ENCODE measurements at regions of chr9 and their contacts with region 1.

Region 1: GRCh38 chr9:123338710-123339665 is 17.0 kb upstream of the CRB2 start:
- DNase-seq: peak; percentile 76
- ATAC-seq: peak; percentile 56
- H3K4me3 Mint-ChIP-seq: peak overlapping the region; percentile 85
- H3K27ac Mint-ChIP-seq: peak overlapping the region; percentile 96
- H3K4me1 Mint-ChIP-seq: peaks cover 97% of the 10 kb centered on the region
- H3K27me3 Mint-ChIP-seq: no peaks in the 10 kb centered on the region
- CTCF ChIP-seq: no peak

Region 2: GRCh38 chr9:123081824-123082223 is 257.2 kb before region 1 on chr9:
- CTCF ChIA-PET with region 1: interaction called, 10 read pairs
- POLR2A ChIA-PET with region 1: no interaction called
- intact Hi-C with region 1: no loop called
- DNase-seq: no peak
- ATAC-seq: peak; percentile 66
- H3K4me3 Mint-ChIP-seq: no peak overlapping the region
- H3K27ac Mint-ChIP-seq: no peak overlapping the region
- H3K4me1 Mint-ChIP-seq: peaks cover 19% of the 10 kb centered on the region
- H3K27me3 Mint-ChIP-seq: no peaks in the 10 kb centered on the region
- CTCF ChIP-seq: peak; percentile 44

Region 3: GRCh38 chr9:123174887-123175518 is 164.0 kb before region 1 on chr9:
- CTCF ChIA-PET with region 1: no interaction called
- POLR2A ChIA-PET with region 1: interaction called, 5 read pairs
- intact Hi-C with region 1: loop called (anchors 1 kb)
- DNase-seq: no peak
- ATAC-seq: peak; percentile 91
- H3K4me3 Mint-ChIP-seq: peak overlapping the region; percentile 63
- H3K27ac Mint-ChIP-seq: peak overlapping the region; percentile 97
- H3K4me1 Mint-ChIP-seq: peaks cover 82% of the 10 kb centered on the region
- H3K27me3 Mint-ChIP-seq: no peaks in the 10 kb centered on the region
- CTCF ChIP-seq: no peak

Region 4: DNA sequence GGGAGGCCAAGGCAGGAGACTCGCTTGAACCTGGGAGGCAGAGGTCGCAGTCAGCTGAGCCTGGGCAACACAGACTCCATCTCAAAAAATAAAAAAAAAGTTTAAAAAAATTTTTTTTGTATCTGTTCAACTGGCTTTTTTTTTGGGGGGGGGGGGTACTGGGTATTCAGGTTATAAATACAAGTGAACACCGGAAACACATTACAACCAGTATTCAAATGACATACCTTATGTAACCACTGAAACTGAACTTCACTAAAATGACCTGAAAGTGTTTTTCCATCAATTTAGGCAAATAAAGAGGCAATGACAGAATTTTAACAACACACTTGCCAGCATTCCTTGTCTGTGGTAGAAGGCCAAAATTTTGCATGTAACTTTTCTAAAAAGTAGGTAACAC is 104.1 kb before region 1 on chr9:
- CTCF ChIA-PET with region 1: interaction called, 6 read pairs
- POLR2A ChIA-PET with region 1: interaction called, 85 read pairs
- intact Hi-C with region 1: loop called (anchors 1 kb)
- DNase-seq: no peak
- ATAC-seq: peak; percentile 42
- H3K4me3 Mint-ChIP-seq: peak overlapping the region; percentile 69
- H3K27ac Mint-ChIP-seq: peak overlapping the region; percentile 94
- H3K4me1 Mint-ChIP-seq: peaks cover 49% of the 10 kb centered on the region
- H3K27me3 Mint-ChIP-seq: no peaks in the 10 kb centered on the region
- CTCF ChIP-seq: no peak

Region 5: GRCh38 chr9:123302348-123303214 is 36.4 kb before region 1 on chr9:
- CTCF ChIA-PET with region 1: interaction called, 3 read pairs
- POLR2A ChIA-PET with region 1: interaction called, 18 read pairs
- intact Hi-C with region 1: loop called (anchors 1 kb)
- DNase-seq: no peak
- ATAC-seq: no peak
- H3K4me3 Mint-ChIP-seq: no peak overlapping the region
- H3K27ac Mint-ChIP-seq: no peak overlapping the region
- H3K4me1 Mint-ChIP-seq: peaks cover 14% of the 10 kb centered on the region
- H3K27me3 Mint-ChIP-seq: no peaks in the 10 kb centered on the region
- CTCF ChIP-seq: no peak

Region 6: GRCh38 chr9:123322273-123323195 is 16.5 kb before region 1 on chr9:
- CTCF ChIA-PET with region 1: interaction called, 7 read pairs
- POLR2A ChIA-PET with region 1: interaction called, 304 read pairs
- intact Hi-C with region 1: loop called (anchors 1 kb)
- DNase-seq: peak; percentile 53
- ATAC-seq: peak; percentile 79
- H3K4me3 Mint-ChIP-seq: peak overlapping the region; percentile 75
- H3K27ac Mint-ChIP-seq: peak overlapping the region; percentile 94
- H3K4me1 Mint-ChIP-seq: peaks cover 90% of the 10 kb centered on the region
- H3K27me3 Mint-ChIP-seq: no peaks in the 10 kb centered on the region
- CTCF ChIP-seq: no peak

Region 7: DNA sequence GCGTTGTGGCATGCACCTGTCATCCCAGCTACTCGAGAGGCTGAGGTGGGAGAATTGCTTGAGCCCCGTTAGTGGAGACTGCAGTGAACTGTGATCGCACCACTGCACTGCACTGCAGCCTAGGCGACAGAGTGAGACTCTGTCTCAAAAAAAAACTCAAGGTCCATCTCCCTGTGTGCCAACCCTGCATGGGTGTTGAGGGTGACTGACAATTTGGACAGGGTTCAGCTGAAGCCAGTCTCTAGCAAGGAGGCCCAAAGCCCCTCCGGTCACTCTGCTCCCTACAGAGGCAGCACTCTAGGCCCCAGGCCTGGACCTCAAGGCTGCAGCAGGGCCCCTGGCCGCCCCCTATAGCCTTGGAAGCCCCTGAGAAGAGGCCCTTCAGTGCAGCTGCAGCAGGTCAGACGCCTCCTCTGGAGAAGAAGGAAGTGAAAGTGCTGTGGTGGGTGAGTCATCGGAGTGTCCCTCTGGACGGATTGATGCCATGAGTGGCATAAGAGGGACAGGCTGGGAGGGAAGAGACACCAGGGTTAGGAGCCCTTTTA is 879.5 kb after region 1 on chr9:
- CTCF ChIA-PET with region 1: no interaction called
- POLR2A ChIA-PET with region 1: no interaction called
- intact Hi-C with region 1: loop called (anchors 5 kb)
- DNase-seq: peak; percentile 78
- ATAC-seq: peak; percentile 64
- H3K4me3 Mint-ChIP-seq: peak overlapping the region; percentile 69
- H3K27ac Mint-ChIP-seq: peak overlapping the region; percentile 96
- H3K4me1 Mint-ChIP-seq: peaks cover 87% of the 10 kb centered on the region
- H3K27me3 Mint-ChIP-seq: no peaks in the 10 kb centered on the region
- CTCF ChIP-seq: no peak